ENCODE measurements at regions of chr13 and their contacts with region 1.

Region 1: GRCh38 chr13:36420437-36420891 is 11.8 kb upstream of the CCNA1 start:
- DNase-seq: peak; percentile 53 to 61
- ATAC-seq: peak; percentile 90 to 94
- H3K4me3 ChIP-seq: no peak overlapping the region
- H3K27ac ChIP-seq: no peak overlapping the region
- H3K4me1 ChIP-seq: no peaks in the 10 kb centered on the region
- CTCF ChIP-seq: peak; percentile 68
- EP300 ChIP-seq: no peak
- POLR2A ChIP-seq: no peak
- RAD21 ChIP-seq: peak; percentile 61 to 62

Region 2: GRCh38 chr13:36431654-36432511 is 11.4 kb after region 1 on chr13 and contains the start of gene CCNA1:
- CTCF ChIA-PET with region 1: interaction called, 10 read pairs
- POLR2A ChIA-PET with region 1: no interaction called
- DNase-seq: peak in 1 of 2 experiments; percentile 10
- ATAC-seq: peak; percentile 64 to 80; a peak in 5 of 6 replicates
- H3K4me3 ChIP-seq: peak within 1 kb of the TSS; percentile 52
- H3K27ac ChIP-seq: no peak within 1 kb of the TSS
- H3K4me1 ChIP-seq: peaks cover 6% of the 10 kb centered on the region; the same call in 1 of the 3 replicates
- CTCF ChIP-seq: no peak
- EP300 ChIP-seq: no peak
- POLR2A ChIP-seq: no peak
- RAD21 ChIP-seq: no peak
- polyA plus RNA-seq, gene CCNA1: 0.21 TPM in 2 replicates

Region 3: DNA sequence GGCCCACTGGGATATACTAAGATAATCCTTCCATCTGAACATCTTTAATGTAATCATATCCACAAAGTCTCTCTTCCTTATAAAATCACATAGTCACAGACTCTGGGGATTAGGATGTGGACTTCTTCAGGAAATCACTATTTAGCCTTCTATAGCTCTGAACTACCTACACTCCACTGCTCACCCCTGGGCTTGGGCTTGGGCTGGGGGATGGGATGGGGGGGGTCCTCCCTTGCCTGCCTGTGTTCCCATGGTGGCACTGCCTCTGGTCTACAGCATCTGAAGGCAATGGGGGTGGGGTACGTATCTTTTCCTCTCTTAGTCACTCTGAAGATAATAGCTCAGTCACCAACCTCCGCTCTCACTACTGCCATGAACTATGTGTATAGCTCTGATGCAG is 185.6 kb after region 1 on chr13:
- CTCF ChIA-PET with region 1: no interaction called
- POLR2A ChIA-PET with region 1: no interaction called
- DNase-seq: no peak
- ATAC-seq: no peak
- H3K4me3 ChIP-seq: no peak overlapping the region
- H3K27ac ChIP-seq: no peak overlapping the region
- H3K4me1 ChIP-seq: no peaks in the 10 kb centered on the region
- CTCF ChIP-seq: no peak
- EP300 ChIP-seq: no peak
- POLR2A ChIP-seq: no peak
- RAD21 ChIP-seq: no peak